ENCODE measurements at regions of chr16 and their contacts with region 1.

Region 1: GRCh38 chr16:77971306-77972271 is 50.8 kb upstream of the CLEC3A start:
- DNase-seq: peak; percentile 88

Region 2: GRCh38 chr16:77675464-77676324 is 295.9 kb before region 1 on chr16:
- intact Hi-C with region 1: loop called (anchors 2 kb)
- DNase-seq: no peak

Region 3: DNA sequence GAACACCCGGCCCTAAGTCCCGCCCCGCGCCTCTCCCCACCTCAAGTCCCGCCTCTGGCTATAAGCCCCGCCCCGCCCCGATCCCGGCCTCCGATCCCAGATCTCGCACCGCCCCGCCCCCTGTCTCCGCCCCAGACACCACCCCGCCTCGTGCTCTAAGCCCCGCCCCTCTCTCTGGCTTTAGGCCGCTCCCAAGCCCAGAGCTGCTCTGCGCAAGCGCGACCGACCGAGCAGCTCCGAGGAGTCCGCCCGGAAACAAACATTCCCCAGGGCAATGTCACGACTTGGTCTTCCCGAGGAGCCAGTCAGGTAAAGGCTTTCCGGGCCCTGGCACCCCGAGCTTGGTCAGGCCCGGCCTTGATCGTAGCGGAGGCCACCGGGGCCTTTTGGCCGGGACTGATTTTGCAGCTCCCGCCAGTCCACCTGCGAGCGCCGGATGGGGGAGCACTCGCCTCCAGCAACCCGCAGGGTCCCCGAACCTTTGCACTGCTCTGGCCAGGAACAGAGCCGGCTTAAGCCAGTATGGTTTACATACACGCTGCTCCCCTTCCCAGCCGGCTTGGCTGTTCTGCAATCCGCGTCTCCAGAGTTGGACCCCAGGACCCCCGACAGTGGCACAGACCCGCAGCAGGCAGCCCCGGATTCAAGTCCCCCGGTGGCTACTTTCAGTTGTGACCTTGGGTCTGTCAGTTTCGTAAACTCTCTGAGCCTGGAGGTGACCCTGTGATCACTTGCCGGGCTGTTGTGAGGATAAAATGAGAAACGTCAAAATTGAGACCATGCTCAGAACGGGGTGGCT is 249.1 kb before region 1 on chr16 and contains the start of gene NUDT7:
- intact Hi-C with region 1: loop called (anchors 5 kb)
- DNase-seq: peak; percentile 98
- total RNA-seq, gene NUDT7: 46.8 TPM

Region 4: GRCh38 chr16:77788181-77789084 is 183.2 kb before region 1 on chr16 and contains the start of gene VAT1L:
- intact Hi-C with region 1: loop called (anchors 5 kb)
- DNase-seq: no peak
- total RNA-seq, gene VAT1L: 49.4 TPM

Region 5: GRCh38 chr16:77856438-77857160 is 115.0 kb before region 1 on chr16:
- intact Hi-C with region 1: loop called (anchors 5 kb)
- DNase-seq: no peak

Measured in cardiac septum (tissue), 1 donor.